ENCODE measurements at regions of chr17 and their contacts with region 1.

Region 1: GRCh38 chr17:45927247-45927646 is 32.9 kb downstream of the MAPT start:
- DNase-seq: no peak
- H3K27ac ChIP-seq: no peak overlapping the region
- CTCF ChIP-seq: no peak

Region 2: GRCh38 chr17:45948881-45949624 is 21.8 kb after region 1 on chr17:
- CTCF ChIA-PET with region 1: no interaction called
- POLR2A ChIA-PET with region 1: interaction called, 11 read pairs
- DNase-seq: peak; percentile 74
- H3K27ac ChIP-seq: no peak overlapping the region
- CTCF ChIP-seq: peak; percentile 87

Measured in RWPE1 (cell line).